IMR-90 (cell line): ENCODE measurements at regions of chr16 and their contacts with region 1.

Region 1: DNA sequence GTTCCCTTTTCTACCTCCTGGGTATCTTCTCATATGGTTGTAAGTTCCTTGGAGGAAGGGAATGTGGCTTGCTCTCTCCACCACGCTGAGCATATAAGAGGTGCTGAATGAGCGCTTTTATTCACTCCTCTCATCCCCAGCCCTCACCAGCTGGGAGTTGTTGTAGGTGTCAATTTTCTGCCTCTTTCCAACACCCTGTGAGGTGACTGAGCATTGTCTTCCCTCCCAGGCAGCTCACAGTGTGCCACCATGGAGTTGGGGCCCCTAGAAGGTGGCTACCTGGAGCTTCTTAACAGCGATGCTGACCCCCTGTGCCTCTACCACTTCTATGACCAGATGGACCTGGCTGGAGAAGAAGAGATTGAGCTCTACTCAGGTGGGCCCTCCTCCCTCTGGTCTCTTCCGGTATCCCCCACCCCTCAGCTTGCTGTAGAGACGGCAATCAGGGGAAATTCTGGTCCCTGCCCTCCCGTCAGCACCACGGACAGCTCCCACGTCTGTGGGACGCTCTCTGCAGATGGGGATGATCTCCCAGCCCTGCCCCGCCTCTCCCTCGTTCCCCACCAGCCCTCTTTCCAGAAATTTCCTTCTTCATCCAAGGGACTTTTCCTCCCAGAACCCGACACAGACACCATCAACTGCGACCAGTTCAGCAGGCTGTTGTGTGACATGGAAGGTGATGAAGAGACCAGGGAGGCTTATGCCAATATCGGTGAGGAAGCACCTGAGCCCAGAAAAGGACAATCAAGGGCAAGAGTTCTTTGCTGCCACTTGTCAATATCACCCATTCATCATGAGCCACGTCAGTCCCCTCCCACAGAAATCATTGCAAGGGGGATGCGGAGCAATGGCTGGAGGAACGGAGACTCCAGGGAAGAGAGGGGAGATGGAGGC is 18.3 kb downstream of the CIITA start:
- DNase-seq: peak; percentile 38
- ATAC-seq: peak; percentile 83
- H3K4me3 ChIP-seq: no peak overlapping the region
- H3K27ac ChIP-seq: no peak overlapping the region
- H3K4me1 ChIP-seq: no peaks in the 10 kb centered on the region
- H3K27me3 ChIP-seq: peaks cover 5% of the 10 kb centered on the region
- CTCF ChIP-seq: no peak
- POLR2A ChIP-seq: no peak
- RAD21 ChIP-seq: no peak

Region 2: GRCh38 chr16:10566589-10566988 is 328.7 kb before region 1 on chr16:
- CTCF ChIA-PET with region 1: no interaction called
- POLR2A ChIA-PET with region 1: no interaction called
- dilution Hi-C with region 1: no loop called
- in situ Hi-C with region 1: no loop called
- intact Hi-C with region 1: no loop called
- DNase-seq: no peak
- ATAC-seq: no peak
- H3K4me3 ChIP-seq: no peak overlapping the region
- H3K27ac ChIP-seq: no peak overlapping the region
- H3K4me1 ChIP-seq: peaks cover 7% of the 10 kb centered on the region
- H3K27me3 ChIP-seq: no peaks in the 10 kb centered on the region
- CTCF ChIP-seq: no peak
- POLR2A ChIP-seq: no peak
- RAD21 ChIP-seq: no peak

Region 3: GRCh38 chr16:10868596-10869469 is 26.5 kb before region 1 on chr16:
- CTCF ChIA-PET with region 1: no interaction called
- POLR2A ChIA-PET with region 1: no interaction called
- dilution Hi-C with region 1: no loop called
- in situ Hi-C with region 1: no loop called
- intact Hi-C with region 1: loop called (anchors 1 kb)
- DNase-seq: no peak
- ATAC-seq: no peak
- H3K4me3 ChIP-seq: no peak overlapping the region
- H3K27ac ChIP-seq: no peak overlapping the region
- H3K4me1 ChIP-seq: peaks cover 5% of the 10 kb centered on the region
- H3K27me3 ChIP-seq: peaks cover 6% of the 10 kb centered on the region
- CTCF ChIP-seq: no peak
- POLR2A ChIP-seq: no peak
- RAD21 ChIP-seq: no peak

Region 4: GRCh38 chr16:11689031-11689761 is 793.9 kb after region 1 on chr16:
- CTCF ChIA-PET with region 1: no interaction called
- POLR2A ChIA-PET with region 1: no interaction called
- dilution Hi-C with region 1: no loop called
- in situ Hi-C with region 1: no loop called
- intact Hi-C with region 1: no loop called
- DNase-seq: no peak
- ATAC-seq: no peak
- H3K4me3 ChIP-seq: no peak overlapping the region
- H3K27ac ChIP-seq: no peak overlapping the region
- H3K4me1 ChIP-seq: peaks cover 11% of the 10 kb centered on the region
- H3K27me3 ChIP-seq: no peaks in the 10 kb centered on the region
- CTCF ChIP-seq: no peak
- POLR2A ChIP-seq: no peak
- RAD21 ChIP-seq: no peak